K562 (cell line): ENCODE measurements at regions of chr4 and their contacts with region 1.

Region 1: GRCh38 chr4:69858690-69859089 is 1.3 kb downstream of the SULT1E1 start:
- DNase-seq: no peak
- ATAC-seq: no peak
- H3K4me3 ChIP-seq: no peak overlapping the region
- H3K27ac ChIP-seq: no peak overlapping the region
- H3K4me1 ChIP-seq: no peaks in the 10 kb centered on the region
- H3K27me3 ChIP-seq: no peaks in the 10 kb centered on the region
- CTCF ChIP-seq: no peak
- EP300 ChIP-seq: no peak
- POLR2A ChIP-seq: no peak
- RAD21 ChIP-seq: no peak

Region 2: DNA sequence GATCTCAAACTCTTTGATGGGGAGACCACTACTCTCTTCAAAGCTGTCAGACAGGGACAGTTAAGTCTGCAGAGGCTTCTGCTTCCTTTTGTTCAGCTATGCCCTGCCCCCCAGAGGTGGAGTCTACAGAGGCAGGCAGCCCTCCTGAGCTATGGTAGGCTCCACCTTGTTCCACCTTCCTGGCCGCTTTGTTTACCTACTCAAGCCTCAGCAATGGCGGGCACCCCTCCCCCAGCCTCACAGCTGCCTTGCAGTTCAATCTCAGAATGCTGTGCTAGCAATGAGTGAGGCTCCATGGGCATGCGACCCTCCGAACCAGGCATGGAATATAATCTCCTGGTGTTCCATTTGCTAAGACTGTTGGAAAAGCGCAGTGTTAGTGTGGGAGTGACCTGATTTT is 1085.0 kb before region 1 on chr4:
- CTCF ChIA-PET with region 1: no interaction called
- POLR2A ChIA-PET with region 1: no interaction called
- in situ Hi-C with region 1: loop called (anchors 25 kb)
- intact Hi-C with region 1: no loop called
- DNase-seq: no peak
- ATAC-seq: no peak
- H3K4me3 ChIP-seq: no peak overlapping the region
- H3K27ac ChIP-seq: no peak overlapping the region
- H3K4me1 ChIP-seq: no peaks in the 10 kb centered on the region
- H3K27me3 ChIP-seq: no peaks in the 10 kb centered on the region
- CTCF ChIP-seq: no peak
- EP300 ChIP-seq: no peak
- POLR2A ChIP-seq: no peak
- RAD21 ChIP-seq: no peak

Region 3: GRCh38 chr4:69576251-69576877 is 282.3 kb before region 1 on chr4:
- CTCF ChIA-PET with region 1: no interaction called
- POLR2A ChIA-PET with region 1: no interaction called
- in situ Hi-C with region 1: no loop called
- intact Hi-C with region 1: no loop called
- DNase-seq: no peak
- ATAC-seq: no peak
- H3K4me3 ChIP-seq: no peak overlapping the region
- H3K27ac ChIP-seq: no peak overlapping the region
- H3K4me1 ChIP-seq: no peaks in the 10 kb centered on the region
- H3K27me3 ChIP-seq: no peaks in the 10 kb centered on the region
- CTCF ChIP-seq: no peak
- EP300 ChIP-seq: no peak
- POLR2A ChIP-seq: no peak
- RAD21 ChIP-seq: no peak

Region 4: DNA sequence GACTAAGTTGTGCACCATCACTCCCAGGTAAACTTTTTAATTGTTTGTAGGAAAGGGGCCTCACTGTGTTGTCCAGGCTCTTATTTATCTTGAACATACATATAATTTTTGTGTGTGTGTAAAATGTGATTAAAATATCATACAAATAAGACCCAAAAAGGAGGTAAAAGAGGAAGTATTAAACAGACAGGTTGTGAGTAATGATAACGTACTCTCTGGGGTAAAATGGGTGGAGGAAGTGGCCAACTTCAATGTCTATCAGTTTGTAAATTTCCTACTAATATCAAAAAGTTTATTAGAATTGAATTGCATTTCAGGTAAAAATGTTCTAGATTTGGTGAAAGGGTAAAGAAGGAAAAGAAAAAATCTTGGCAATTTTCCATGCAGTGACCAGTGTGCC is 47.5 kb before region 1 on chr4:
- CTCF ChIA-PET with region 1: no interaction called
- POLR2A ChIA-PET with region 1: no interaction called
- in situ Hi-C with region 1: no loop called
- intact Hi-C with region 1: no loop called
- DNase-seq: no peak
- ATAC-seq: no peak
- H3K4me3 ChIP-seq: no peak overlapping the region
- H3K27ac ChIP-seq: no peak overlapping the region
- H3K4me1 ChIP-seq: no peaks in the 10 kb centered on the region
- H3K27me3 ChIP-seq: no peaks in the 10 kb centered on the region
- CTCF ChIP-seq: no peak
- EP300 ChIP-seq: no peak
- POLR2A ChIP-seq: no peak
- RAD21 ChIP-seq: no peak

Region 5: GRCh38 chr4:70425306-70425705 is 566.6 kb after region 1 on chr4:
- CTCF ChIA-PET with region 1: no interaction called
- POLR2A ChIA-PET with region 1: no interaction called
- in situ Hi-C with region 1: no loop called
- intact Hi-C with region 1: no loop called
- DNase-seq: no peak
- ATAC-seq: no peak
- H3K4me3 ChIP-seq: no peak overlapping the region
- H3K27ac ChIP-seq: no peak overlapping the region
- H3K4me1 ChIP-seq: no peaks in the 10 kb centered on the region
- H3K27me3 ChIP-seq: no peaks in the 10 kb centered on the region
- CTCF ChIP-seq: no peak
- EP300 ChIP-seq: no peak
- POLR2A ChIP-seq: no peak
- RAD21 ChIP-seq: no peak